CD14-positive monocyte (primary cell): ENCODE measurements at regions of chr18 and their contacts with region 1.

Region 1: DNA sequence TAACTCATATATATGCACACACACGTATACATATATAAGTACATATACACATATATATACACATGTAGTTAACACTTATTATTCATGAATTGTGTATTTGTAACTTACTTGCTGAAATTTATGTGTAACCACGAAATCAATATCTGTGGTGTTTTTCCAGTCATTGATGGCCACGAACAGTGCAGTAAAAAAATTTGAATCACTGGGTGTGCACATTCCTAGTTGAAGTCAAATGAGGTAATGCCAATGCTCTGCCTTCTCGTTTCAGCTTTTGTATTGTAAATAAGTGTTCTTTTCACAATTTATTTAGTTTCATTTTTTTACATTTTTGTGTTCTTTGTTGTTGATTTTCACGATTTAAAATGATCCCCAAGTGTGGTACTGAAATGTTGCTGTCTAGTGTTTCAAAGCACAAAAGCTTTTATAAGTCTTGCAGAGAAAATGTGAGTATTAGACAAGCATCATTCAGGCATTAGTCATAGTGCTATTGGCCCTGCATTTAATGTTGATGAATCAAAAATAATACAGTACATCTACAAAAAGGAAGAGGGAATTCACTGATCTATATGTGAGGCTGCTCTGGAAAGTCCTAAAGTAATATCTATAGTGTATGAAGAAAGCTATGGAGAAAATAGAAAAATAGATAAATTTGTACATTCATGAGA is 419.0 kb downstream of the DSC3 start:
- DNase-seq: no peak
- H3K4me3 ChIP-seq: no peak overlapping the region
- H3K4me3 Mint-ChIP-seq: no peak overlapping the region
- H3K27ac ChIP-seq: no peak overlapping the region
- H3K27ac Mint-ChIP-seq: no peak overlapping the region
- H3K4me1 ChIP-seq: no peaks in the 10 kb centered on the region
- H3K4me1 Mint-ChIP-seq: no peaks in the 10 kb centered on the region
- H3K27me3 ChIP-seq: no peaks in the 10 kb centered on the region
- H3K27me3 Mint-ChIP-seq: no peaks in the 10 kb centered on the region
- CTCF ChIP-seq: no peak

Region 2: GRCh38 chr18:30682672-30683071 is 59.1 kb after region 1 on chr18:
- intact Hi-C with region 1: loop called in 1 of 2 experiments (anchors 10 kb)
- DNase-seq: no peak
- H3K4me3 ChIP-seq: no peak overlapping the region
- H3K4me3 Mint-ChIP-seq: no peak overlapping the region
- H3K27ac ChIP-seq: no peak overlapping the region
- H3K27ac Mint-ChIP-seq: no peak overlapping the region
- H3K4me1 ChIP-seq: no peaks in the 10 kb centered on the region
- H3K4me1 Mint-ChIP-seq: no peaks in the 10 kb centered on the region
- H3K27me3 ChIP-seq: no peaks in the 10 kb centered on the region
- H3K27me3 Mint-ChIP-seq: no peaks in the 10 kb centered on the region
- CTCF ChIP-seq: no peak

Region 3: DNA sequence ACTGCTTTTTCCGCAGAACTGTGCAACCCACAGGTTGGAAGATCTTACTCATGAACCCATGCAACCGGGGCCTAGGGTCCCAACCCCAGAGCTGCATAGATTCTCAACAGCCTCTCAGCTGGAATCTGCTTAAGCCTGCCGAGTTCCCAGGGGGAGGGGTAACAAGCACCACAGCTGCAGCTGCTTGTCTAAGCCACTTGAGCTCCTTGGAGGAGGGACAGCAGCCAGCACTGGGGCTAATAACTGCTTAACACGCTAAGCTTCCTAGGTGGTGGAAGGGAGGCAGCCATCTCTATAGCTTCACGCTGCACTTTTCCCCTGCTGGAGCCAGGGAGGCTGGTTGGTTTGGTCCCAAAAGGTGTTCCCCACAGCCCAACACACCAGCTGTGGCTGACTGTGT is 107.4 kb after region 1 on chr18:
- intact Hi-C with region 1: no loop called
- DNase-seq: no peak
- H3K4me3 ChIP-seq: no peak overlapping the region
- H3K4me3 Mint-ChIP-seq: no peak overlapping the region
- H3K27ac ChIP-seq: no peak overlapping the region
- H3K27ac Mint-ChIP-seq: no peak overlapping the region
- H3K4me1 ChIP-seq: no peaks in the 10 kb centered on the region
- H3K4me1 Mint-ChIP-seq: no peaks in the 10 kb centered on the region
- H3K27me3 ChIP-seq: no peaks in the 10 kb centered on the region
- H3K27me3 Mint-ChIP-seq: no peaks in the 10 kb centered on the region
- CTCF ChIP-seq: no peak